ENCODE measurements at regions of chr18 and their contacts with region 1.

Region 1: GRCh38 chr18:49412679-49413078 is 47.8 kb downstream of the DYM start:
- DNase-seq: no peak
- H3K4me3 Mint-ChIP-seq: no peak overlapping the region
- H3K27ac Mint-ChIP-seq: no peak overlapping the region
- H3K4me1 Mint-ChIP-seq: no peaks in the 10 kb centered on the region
- H3K27me3 Mint-ChIP-seq: no peaks in the 10 kb centered on the region
- CTCF ChIP-seq: no peak

Region 2: GRCh38 chr18:49021433-49022129 is 391.1 kb before region 1 on chr18:
- CTCF ChIA-PET with region 1: no interaction called
- POLR2A ChIA-PET with region 1: no interaction called
- intact Hi-C with region 1: loop called (anchors 10 kb)
- DNase-seq: peak; percentile 93
- H3K4me3 Mint-ChIP-seq: peak overlapping the region; percentile 40
- H3K27ac Mint-ChIP-seq: peak overlapping the region; percentile 73
- H3K4me1 Mint-ChIP-seq: peaks cover 19% of the 10 kb centered on the region
- H3K27me3 Mint-ChIP-seq: no peaks in the 10 kb centered on the region
- CTCF ChIP-seq: peak; percentile 23

Region 3: DNA sequence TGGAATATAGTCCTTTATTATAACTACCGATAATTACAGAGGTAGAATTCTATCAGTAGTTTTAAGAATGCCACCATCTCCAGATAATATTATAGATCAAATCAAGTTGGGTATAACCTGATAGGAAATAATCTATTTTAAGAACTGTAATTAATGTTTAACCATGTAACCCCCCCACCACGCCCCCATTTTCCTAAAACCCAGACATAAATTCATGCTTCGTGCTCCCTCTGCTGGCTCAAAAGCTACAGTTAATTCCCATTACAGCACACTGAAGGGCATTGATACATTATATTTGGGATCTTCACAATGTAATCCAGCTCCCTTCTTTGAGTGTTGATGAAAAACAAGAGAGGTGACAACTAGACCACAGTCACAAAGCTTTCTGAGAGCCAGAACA is 233.9 kb before region 1 on chr18:
- CTCF ChIA-PET with region 1: no interaction called
- POLR2A ChIA-PET with region 1: no interaction called
- intact Hi-C with region 1: loop called (anchors 5 kb)
- DNase-seq: peak; percentile 30
- H3K4me3 Mint-ChIP-seq: no peak overlapping the region
- H3K27ac Mint-ChIP-seq: no peak overlapping the region
- H3K4me1 Mint-ChIP-seq: peaks cover 12% of the 10 kb centered on the region
- H3K27me3 Mint-ChIP-seq: no peaks in the 10 kb centered on the region
- CTCF ChIP-seq: peak; percentile 62

Region 4: GRCh38 chr18:49250816-49251388 is 161.8 kb before region 1 on chr18:
- CTCF ChIA-PET with region 1: no interaction called
- POLR2A ChIA-PET with region 1: no interaction called
- intact Hi-C with region 1: loop called (anchors 1 kb)
- DNase-seq: peak; percentile 14
- H3K4me3 Mint-ChIP-seq: no peak overlapping the region
- H3K27ac Mint-ChIP-seq: no peak overlapping the region
- H3K4me1 Mint-ChIP-seq: peaks cover 17% of the 10 kb centered on the region
- H3K27me3 Mint-ChIP-seq: no peaks in the 10 kb centered on the region
- CTCF ChIP-seq: peak; percentile 41

Region 5: GRCh38 chr18:49550621-49551339 is 138.1 kb after region 1 on chr18:
- CTCF ChIA-PET with region 1: no interaction called
- POLR2A ChIA-PET with region 1: no interaction called
- intact Hi-C with region 1: no loop called
- DNase-seq: no peak
- H3K4me3 Mint-ChIP-seq: no peak overlapping the region
- H3K27ac Mint-ChIP-seq: no peak overlapping the region
- H3K4me1 Mint-ChIP-seq: no peaks in the 10 kb centered on the region
- H3K27me3 Mint-ChIP-seq: no peaks in the 10 kb centered on the region
- CTCF ChIP-seq: no peak

Region 6: GRCh38 chr18:49612515-49613033 is 199.9 kb after region 1 on chr18:
- CTCF ChIA-PET with region 1: no interaction called
- POLR2A ChIA-PET with region 1: no interaction called
- intact Hi-C with region 1: no loop called
- DNase-seq: peak; percentile 9
- H3K4me3 Mint-ChIP-seq: no peak overlapping the region
- H3K27ac Mint-ChIP-seq: no peak overlapping the region
- H3K4me1 Mint-ChIP-seq: peaks cover 44% of the 10 kb centered on the region
- H3K27me3 Mint-ChIP-seq: no peaks in the 10 kb centered on the region
- CTCF ChIP-seq: no peak